Activated naive CD4-positive, alpha-beta T cell treated with anti-CD3 and anti-CD28 coated beads for 36 hours (primary cell): ENCODE measurements at regions of chr9 and their contacts with region 1.

Region 1: DNA sequence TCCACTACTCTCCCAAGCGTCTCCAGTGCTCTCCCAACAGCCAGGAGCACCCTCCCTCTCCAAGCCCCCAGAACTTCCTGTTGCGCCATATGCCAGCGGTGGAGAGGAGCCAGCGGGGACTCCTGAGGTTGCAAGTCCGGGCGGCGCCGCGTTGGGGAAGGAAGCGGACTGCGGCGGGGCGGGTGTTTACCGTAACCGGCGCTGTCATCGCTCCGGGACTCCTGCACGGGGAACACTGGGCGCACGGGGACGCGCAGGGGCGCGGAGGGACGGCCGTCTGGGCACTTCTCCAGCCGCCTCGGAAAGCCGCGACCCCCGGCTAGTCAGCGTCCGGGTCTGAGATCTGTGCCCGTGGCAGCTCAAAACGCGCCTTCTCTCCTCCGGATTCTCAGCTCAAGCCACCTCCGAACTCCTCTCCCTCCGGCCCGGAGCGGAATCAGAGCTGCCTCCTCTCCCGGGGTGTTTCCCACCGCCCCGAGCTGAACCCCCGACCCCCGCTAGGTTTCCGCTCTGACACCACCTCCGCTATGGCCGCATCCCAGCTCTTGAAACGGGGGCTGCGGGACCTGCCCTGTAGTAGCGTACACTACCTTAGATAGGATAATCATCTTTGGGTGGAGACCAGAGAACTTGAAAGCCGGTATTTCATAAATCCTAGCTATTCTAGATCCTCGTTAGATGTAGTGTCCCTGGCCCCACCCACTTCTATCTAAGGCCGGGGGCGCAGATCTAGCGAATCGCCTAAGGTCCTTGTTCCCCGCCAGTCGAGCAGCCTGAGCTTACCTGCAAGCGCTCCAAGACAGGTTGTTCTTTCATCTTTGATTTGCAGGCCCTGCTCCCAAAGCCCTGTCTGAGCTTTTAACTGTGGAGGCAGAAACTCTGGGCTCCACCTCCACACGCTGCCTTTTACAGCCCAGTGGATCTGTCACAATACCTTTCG is at the start of gene TRPM6:
- DNase-seq: peak; percentile 56
- H3K4me3 Mint-ChIP-seq: peak within 1 kb of the TSS; percentile 77
- H3K27ac Mint-ChIP-seq: no peak within 1 kb of the TSS
- H3K4me1 Mint-ChIP-seq: peaks cover 8% of the 10 kb centered on the region
- H3K27me3 Mint-ChIP-seq: peaks cover 46% of the 10 kb centered on the region
- total RNA-seq, gene TRPM6: not detected

Region 2: DNA sequence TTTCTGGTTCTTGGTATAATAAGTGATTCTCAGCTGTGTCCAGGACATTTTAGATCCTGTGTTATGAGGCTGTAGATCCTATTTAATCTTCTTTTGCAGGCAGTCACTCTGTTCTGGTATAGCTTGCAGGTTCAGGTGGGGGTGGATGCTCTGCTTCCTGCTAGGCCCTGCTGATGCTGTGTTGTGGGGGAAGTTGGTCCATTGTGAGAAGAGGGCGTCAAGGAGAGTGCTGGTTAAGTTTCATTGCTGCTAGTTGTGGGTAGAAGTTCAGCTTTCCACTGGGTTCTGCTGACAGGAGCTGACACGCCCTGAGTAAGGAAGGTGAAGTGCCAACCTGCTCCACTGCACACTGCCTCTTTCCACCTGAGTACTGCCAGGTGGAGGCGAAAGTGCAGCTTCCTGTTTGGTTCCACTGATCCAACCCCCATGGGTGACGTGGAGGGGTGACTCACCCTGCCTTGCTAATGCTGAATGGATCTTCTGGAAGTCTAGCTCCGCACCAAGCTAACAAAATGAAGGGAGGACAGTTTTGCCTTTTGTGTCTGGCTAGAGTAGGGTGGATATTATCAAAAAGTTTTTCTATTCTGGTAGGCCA is 184.3 kb after region 1 on chr9:
- CTCF ChIA-PET with region 1: no interaction called
- intact Hi-C with region 1: loop called (anchors 5 kb)
- DNase-seq: peak; percentile 90
- H3K4me3 Mint-ChIP-seq: peak overlapping the region; percentile 0
- H3K27ac Mint-ChIP-seq: peak overlapping the region; percentile 79
- H3K4me1 Mint-ChIP-seq: peaks cover 41% of the 10 kb centered on the region
- H3K27me3 Mint-ChIP-seq: no peaks in the 10 kb centered on the region

Region 3: DNA sequence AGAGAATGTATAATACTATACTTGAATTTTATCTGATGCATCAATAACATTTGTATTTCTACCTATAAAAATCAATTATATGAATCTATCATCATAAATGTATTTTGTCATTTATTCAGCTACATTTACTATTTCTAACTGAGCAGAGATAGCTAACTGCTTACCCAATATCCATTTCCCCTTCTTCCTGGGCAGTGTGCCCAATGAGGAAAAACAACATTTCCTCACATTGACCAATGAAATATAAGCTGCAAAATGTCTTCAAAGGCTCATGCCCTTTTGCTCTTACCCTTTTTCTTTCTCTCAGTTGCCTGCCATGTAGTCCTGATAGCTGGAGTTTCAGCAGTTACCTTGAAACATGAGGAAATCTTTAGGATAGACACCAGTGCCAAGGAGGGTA is 617.4 kb after region 1 on chr9:
- CTCF ChIA-PET with region 1: no interaction called
- intact Hi-C with region 1: no loop called
- DNase-seq: no peak
- H3K4me3 Mint-ChIP-seq: no peak overlapping the region
- H3K27ac Mint-ChIP-seq: no peak overlapping the region
- H3K4me1 Mint-ChIP-seq: no peaks in the 10 kb centered on the region
- H3K27me3 Mint-ChIP-seq: peaks cover 10% of the 10 kb centered on the region